ENCODE measurements at regions of chr1 and their contacts with region 1.

Region 1: DNA sequence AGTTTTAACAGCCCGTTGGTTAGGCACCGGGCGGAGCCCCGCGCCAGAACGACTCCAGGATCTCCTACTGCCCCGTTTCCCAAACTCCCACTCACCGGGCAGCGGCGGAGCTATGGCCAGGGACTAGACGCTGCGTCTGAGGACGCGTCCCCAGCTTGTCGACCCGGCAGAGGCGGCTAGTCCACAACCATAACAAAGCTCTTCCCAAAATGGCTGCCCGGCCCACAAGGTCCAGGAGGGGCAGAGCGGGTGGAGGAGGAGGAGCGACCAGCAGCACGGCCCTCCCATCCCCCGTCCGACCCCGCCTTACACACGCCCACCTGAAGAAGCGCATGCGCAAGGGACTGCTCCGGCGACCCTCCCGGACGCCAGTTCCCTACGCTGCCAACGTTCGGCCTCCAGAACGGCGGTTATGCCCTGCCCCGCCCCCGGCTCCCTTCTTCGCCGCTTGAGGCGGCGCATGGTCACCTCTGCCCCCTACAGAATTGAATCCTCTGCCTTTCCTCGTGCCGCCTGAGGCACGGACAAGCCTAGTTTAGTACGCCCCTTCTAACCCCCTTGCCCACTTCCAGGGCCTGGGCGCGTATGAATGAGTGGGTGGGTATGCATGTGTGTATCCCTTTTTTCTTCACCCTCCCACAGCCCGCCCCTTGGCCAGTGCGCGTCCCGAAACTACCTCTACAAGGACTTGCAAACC is at the start of gene GPBP1L1:
- DNase-seq: peak; percentile 82 to 98
- H3K4me3 ChIP-seq: peak within 1 kb of the TSS; percentile 94
- H3K27ac ChIP-seq: peak within 1 kb of the TSS; percentile 95
- H3K4me1 ChIP-seq: peaks cover 16% of the 10 kb centered on the region
- H3K27me3 ChIP-seq: no peaks in the 10 kb centered on the region
- CTCF ChIP-seq: no peak
- total RNA-seq, gene GPBP1L1: 124 and 138 TPM in 2 replicates

Region 2: DNA sequence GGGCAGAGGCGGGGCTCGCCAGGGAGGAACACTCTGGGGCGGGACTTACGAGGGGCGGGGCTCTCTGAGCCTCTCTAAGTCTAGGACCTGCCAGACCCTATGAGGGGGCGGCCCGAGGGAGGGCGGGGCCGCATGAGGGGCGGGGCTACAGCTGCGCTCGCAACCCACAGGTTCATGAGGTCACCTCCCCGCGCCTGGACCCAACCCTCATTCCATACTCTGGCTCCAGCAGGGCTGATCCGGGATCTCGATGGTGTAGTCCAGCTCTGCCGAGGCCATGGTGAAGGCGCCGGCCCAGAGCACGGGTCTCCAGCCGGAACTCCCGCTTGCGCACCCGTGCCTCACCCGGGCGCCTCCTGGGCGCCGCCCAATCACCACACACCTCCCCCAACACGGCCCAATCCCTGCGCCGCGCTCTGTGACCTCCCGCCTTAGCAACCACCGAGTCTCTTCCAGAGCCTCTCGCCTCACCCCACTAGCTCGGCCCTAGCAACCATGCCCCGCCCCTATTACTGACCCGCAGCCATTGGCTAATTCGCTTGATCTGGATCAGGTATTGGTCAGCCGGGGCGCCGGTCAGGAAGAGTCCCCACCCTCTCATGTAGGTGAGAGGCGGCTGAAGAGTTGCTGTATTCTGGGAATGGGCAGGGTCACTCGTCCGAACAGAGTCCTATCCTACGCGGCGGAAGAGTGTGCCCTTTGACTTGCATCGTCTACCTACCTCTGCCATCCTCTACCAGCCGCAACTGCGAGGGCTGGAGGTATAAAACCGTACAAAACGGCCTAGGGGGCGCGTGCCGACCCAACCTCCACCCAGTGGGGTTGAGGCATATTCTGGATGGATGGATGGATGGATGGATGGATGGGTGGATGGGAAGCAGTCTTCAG is 1012.1 kb before region 1 on chr1 and contains the starts of genes ARMH1 and TMEM53:
- CTCF ChIA-PET with region 1: no interaction called
- POLR2A ChIA-PET with region 1: no interaction called
- intact Hi-C with region 1: loop called (anchors 10 kb)
- DNase-seq: peak; percentile 98 to 100
- H3K4me3 ChIP-seq: peak within 1 kb of the TSS; percentile 81
- H3K27ac ChIP-seq: peak within 1 kb of the TSS; percentile 89
- H3K4me1 ChIP-seq: peaks cover 54% of the 10 kb centered on the region
- H3K27me3 ChIP-seq: no peaks in the 10 kb centered on the region
- CTCF ChIP-seq: no peak
- total RNA-seq, gene ARMH1: 16.3 and 16.9 TPM in 2 replicates
- total RNA-seq, gene TMEM53: 33.2 and 36.1 TPM in 2 replicates

Region 3: DNA sequence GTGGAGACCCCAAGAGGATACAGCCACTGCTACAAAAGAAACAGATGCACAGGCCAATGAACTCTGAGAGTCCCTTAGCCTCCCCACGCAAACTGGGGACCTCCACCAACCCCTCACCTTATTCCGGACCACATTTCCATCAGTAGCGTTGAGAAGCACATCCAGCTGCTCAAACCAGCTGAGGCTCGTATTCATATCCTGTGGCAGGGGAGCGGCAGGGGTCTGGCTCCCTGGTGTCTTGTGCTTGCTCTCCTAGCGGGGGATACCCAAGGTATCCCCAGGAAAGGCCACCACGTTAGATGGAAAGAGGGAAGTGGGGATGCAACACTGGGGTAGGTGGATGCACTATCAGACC is 187.1 kb before region 1 on chr1:
- CTCF ChIA-PET with region 1: no interaction called
- POLR2A ChIA-PET with region 1: no interaction called
- intact Hi-C with region 1: loop called (anchors 5 kb)
- DNase-seq: no peak
- H3K4me3 ChIP-seq: peak overlapping the region; percentile 79
- H3K27ac ChIP-seq: no peak overlapping the region
- H3K4me1 ChIP-seq: peaks cover 18% of the 10 kb centered on the region
- H3K27me3 ChIP-seq: no peaks in the 10 kb centered on the region
- CTCF ChIP-seq: no peak

Region 4: GRCh38 chr1:45750298-45751038 is 64.0 kb after region 1 on chr1 and contains the start of gene IPP:
- CTCF ChIA-PET with region 1: no interaction called
- POLR2A ChIA-PET with region 1: no interaction called
- intact Hi-C with region 1: loop called (anchors 1 kb)
- DNase-seq: peak; percentile 92 to 99
- H3K4me3 ChIP-seq: peak within 1 kb of the TSS; percentile 75
- H3K27ac ChIP-seq: peak within 1 kb of the TSS; percentile 78
- H3K4me1 ChIP-seq: peaks cover 11% of the 10 kb centered on the region
- H3K27me3 ChIP-seq: no peaks in the 10 kb centered on the region
- CTCF ChIP-seq: no peak
- total RNA-seq, gene IPP: 25.2 and 25.4 TPM in 2 replicates

Region 5: GRCh38 chr1:45884700-45885099 is 198.2 kb after region 1 on chr1:
- CTCF ChIA-PET with region 1: no interaction called
- POLR2A ChIA-PET with region 1: no interaction called
- intact Hi-C with region 1: loop called (anchors 5 kb)
- DNase-seq: peak; percentile 9 to 37
- H3K4me3 ChIP-seq: no peak overlapping the region
- H3K27ac ChIP-seq: no peak overlapping the region
- H3K4me1 ChIP-seq: no peaks in the 10 kb centered on the region; the same call in 1 of the 2 replicates
- H3K27me3 ChIP-seq: no peaks in the 10 kb centered on the region
- CTCF ChIP-seq: no peak

Region 6: GRCh38 chr1:46173361-46173856 is 486.9 kb after region 1 on chr1:
- CTCF ChIA-PET with region 1: no interaction called
- POLR2A ChIA-PET with region 1: interaction called, 3 read pairs
- intact Hi-C with region 1: loop called (anchors 5 kb)
- DNase-seq: no peak
- H3K4me3 ChIP-seq: no peak overlapping the region
- H3K27ac ChIP-seq: peak overlapping the region; percentile 99
- H3K4me1 ChIP-seq: peaks cover 86% of the 10 kb centered on the region
- H3K27me3 ChIP-seq: no peaks in the 10 kb centered on the region
- CTCF ChIP-seq: no peak

Measured in PC-9 (cell line).